Activated CD4-positive, alpha-beta T cell treated with anti-CD3 and anti-CD28 coated beads, Interleukin-2, amount 10 ng/mL, durations not matched to agents 24 days and 14 days (primary cell): ENCODE measurements at regions of chr16 and their contacts with region 1.

Region 1: DNA sequence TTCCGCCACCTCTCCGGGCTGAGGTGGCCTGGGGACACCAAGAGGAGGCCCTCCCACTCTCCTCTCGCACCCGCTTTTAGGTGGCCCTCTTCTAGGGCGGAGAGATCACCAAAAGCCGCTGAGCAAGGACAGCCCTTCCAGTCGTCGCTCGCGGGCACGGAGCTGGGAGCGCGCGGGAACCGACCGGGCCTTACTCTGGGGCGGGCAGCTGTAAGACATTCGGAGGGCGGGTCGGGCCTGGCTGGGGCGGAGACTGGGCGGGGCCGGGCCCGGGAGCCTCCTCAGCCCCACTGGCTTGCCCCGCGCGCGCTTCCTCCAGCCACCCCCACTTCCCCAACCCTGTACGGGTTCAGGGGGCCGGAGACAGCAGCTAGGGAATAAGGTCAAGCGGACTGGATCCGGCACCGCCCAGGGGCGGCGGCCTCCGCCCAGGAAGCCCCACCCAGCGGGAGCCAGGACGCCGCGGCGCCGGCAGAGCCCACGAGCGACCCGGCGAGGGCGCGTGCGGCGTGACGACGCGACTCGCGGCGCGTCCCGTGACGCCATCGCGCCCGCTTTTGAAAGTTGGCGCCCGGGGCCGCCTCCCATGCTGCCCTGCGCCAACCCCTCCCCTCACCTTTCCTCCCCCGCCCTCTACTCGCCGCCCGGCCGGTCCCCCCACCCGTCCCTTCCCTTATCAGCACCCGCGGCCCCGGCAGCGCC is 351 bp upstream of the CTCF start:
- DNase-seq: peak; percentile 99
- H3K4me3 Mint-ChIP-seq: peak overlapping the region; percentile 89
- H3K27ac Mint-ChIP-seq: peak overlapping the region; percentile 93
- H3K4me1 Mint-ChIP-seq: peaks cover 30% of the 10 kb centered on the region
- H3K27me3 Mint-ChIP-seq: no peaks in the 10 kb centered on the region

Region 2: DNA sequence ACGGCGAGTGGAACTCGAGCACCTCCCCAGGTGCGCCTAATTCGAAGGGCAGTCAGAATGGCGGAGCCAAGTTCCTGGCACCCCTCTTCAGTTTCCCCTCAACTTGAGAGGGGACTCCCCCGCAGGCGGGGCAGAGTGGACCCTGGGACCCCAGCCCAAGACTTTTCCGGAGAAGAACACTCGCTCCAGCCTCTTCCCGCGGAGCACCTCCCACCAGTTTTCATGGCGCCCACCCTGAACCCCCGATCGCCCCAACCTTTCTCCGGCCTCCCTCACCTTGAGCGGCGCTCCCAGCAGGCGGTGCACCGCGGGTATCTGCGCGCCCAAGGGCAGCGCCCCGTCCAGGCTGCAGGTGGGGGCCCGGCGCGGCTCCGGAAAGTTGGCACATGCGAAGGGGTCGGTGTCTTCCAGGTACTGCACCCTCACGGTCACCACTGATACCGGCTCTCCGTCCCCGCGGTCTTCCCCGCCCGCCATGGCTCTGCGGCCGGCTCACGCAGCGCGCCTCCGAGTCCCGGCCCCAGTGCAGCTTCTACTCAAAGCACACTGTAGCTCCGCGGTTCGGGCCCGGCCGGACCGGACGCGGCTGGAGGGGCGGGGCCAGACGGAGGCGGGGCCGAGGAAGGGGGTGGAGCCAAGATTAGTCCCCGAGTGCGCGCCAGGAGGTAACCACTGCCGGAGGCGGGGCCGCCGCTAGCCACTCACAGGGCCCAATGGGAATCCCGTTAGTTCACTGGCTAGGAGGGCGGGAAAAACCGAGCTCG is 314.9 kb before region 1 on chr16 and contains the start of gene FHOD1:
- intact Hi-C with region 1: loop called (anchors 2 kb)
- DNase-seq: peak; percentile 100
- H3K4me3 Mint-ChIP-seq: peak within 1 kb of the TSS; percentile 89
- H3K27ac Mint-ChIP-seq: peak within 1 kb of the TSS; percentile 91
- H3K4me1 Mint-ChIP-seq: peaks cover 49% of the 10 kb centered on the region
- H3K27me3 Mint-ChIP-seq: peaks cover 14% of the 10 kb centered on the region
- total RNA-seq, gene FHOD1: 128 TPM in 2 replicates

Region 3: DNA sequence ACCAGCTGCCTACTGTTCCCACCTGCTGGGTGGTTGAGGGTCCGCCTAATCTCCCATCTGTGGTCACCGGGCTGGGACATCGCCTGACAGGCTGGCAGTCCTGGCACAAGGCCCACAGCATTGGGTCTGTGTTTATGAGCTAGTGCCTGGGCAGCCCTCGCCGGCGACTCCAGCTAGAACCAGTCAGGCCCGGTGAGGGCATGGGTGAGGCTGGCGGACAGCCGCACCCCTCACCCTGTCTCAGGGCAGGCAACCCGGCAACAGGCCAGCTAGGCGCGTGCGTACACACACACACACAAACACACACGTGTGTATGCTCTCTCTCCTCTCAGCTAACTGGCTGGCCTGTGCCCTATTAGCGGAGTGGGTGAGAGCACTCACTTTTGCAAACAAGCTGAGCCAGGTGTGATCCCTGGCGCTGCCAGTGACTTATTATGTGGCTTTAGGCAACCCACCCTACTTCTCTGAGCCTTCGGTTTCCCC is 120.7 kb before region 1 on chr16:
- intact Hi-C with region 1: no loop called
- DNase-seq: no peak
- H3K4me3 Mint-ChIP-seq: no peak overlapping the region
- H3K27ac Mint-ChIP-seq: no peak overlapping the region
- H3K4me1 Mint-ChIP-seq: peaks cover 2% of the 10 kb centered on the region
- H3K27me3 Mint-ChIP-seq: no peaks in the 10 kb centered on the region

Region 4: GRCh38 chr16:67521095-67521804 is 40.7 kb before region 1 on chr16:
- intact Hi-C with region 1: loop called (anchors 1 kb)
- DNase-seq: peak; percentile 99
- H3K4me3 Mint-ChIP-seq: peak overlapping the region; percentile 89
- H3K27ac Mint-ChIP-seq: peak overlapping the region; percentile 100
- H3K4me1 Mint-ChIP-seq: peaks cover 30% of the 10 kb centered on the region
- H3K27me3 Mint-ChIP-seq: peaks cover 18% of the 10 kb centered on the region

Region 5: GRCh38 chr16:67608364-67608763 is 46.4 kb after region 1 on chr16:
- intact Hi-C with region 1: loop called (anchors 5 kb)
- DNase-seq: no peak
- H3K4me3 Mint-ChIP-seq: no peak overlapping the region
- H3K27ac Mint-ChIP-seq: peak overlapping the region; percentile 38
- H3K4me1 Mint-ChIP-seq: peaks cover 7% of the 10 kb centered on the region
- H3K27me3 Mint-ChIP-seq: no peaks in the 10 kb centered on the region

Region 6: DNA sequence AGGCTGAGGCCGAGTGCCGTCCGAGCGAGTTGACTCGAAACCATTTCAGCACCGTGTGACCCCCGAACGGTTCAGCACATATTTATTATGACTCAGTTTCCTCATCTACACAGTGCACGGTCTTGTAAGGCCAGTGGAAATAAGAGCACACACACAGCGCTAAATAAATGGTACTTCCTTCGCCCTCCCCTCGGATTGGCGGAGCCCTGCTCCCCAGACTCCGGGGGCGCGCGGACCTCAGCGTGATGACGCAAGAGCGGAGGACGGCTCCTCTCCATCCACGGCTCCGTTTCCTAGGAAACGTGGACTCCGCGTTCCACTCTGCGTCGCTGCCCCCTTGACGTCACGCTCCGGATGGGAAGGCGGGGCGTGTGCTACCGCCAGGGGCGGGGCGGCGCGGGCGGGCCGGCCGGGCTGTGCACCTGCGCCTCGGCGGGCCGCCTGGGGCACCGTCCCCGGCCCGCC is 98.6 kb after region 1 on chr16 and contains the start of gene PARD6A:
- intact Hi-C with region 1: loop called (anchors 1 kb)
- DNase-seq: peak; percentile 99
- H3K4me3 Mint-ChIP-seq: peak within 1 kb of the TSS; percentile 92
- H3K27ac Mint-ChIP-seq: peak within 1 kb of the TSS; percentile 96
- H3K4me1 Mint-ChIP-seq: peaks cover 23% of the 10 kb centered on the region
- H3K27me3 Mint-ChIP-seq: no peaks in the 10 kb centered on the region
- total RNA-seq, gene PARD6A: 13.5 and 14.0 TPM in 2 replicates

Region 7: DNA sequence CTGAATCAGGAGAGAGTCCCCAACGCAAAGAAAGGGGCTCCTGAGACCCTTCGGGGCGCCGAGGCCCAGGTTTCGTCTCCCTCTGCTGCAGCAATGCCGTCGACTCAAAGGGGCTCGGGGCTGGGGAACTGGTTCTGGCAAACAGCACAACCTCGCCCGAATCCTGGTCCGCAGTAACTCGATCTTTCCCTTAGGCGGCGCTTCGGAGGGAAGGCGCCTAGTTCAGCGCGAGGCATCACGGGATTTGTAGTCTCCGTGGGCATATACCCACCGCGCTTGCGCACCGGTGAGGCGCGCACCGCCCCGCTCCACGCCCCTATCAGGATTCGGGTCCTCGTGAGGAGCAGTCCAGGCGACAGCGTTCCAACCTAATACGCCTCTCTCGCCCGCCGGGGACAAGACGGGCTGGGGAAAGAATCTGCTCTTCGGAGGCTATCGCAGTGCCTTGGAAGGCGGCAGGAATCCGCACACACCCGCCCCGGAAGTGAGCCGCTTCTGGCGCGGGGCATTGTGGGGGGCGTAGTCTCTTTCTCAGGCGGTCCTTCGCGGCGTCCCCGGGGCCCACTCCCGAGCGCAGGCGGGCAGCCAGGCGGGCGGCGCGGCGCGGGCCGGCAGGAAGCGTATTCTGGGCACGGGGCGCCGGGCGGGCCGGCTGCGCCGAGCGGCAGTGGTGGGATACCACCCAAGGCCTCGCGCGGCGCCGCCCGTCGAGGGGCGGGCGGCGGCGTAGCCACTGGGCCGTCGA is 280.0 kb after region 1 on chr16 and contains the start of gene THAP11:
- intact Hi-C with region 1: loop called (anchors 1 kb)
- DNase-seq: peak; percentile 99
- H3K4me3 Mint-ChIP-seq: peak within 1 kb of the TSS; percentile 93
- H3K27ac Mint-ChIP-seq: peak within 1 kb of the TSS; percentile 94
- H3K4me1 Mint-ChIP-seq: peaks cover 26% of the 10 kb centered on the region
- H3K27me3 Mint-ChIP-seq: no peaks in the 10 kb centered on the region
- total RNA-seq, gene THAP11: 46.4 and 48.7 TPM in 2 replicates